T-cell (primary cell): ENCODE measurements at regions of chr1 and their contacts with region 1.

Region 1: GRCh38 chr1:21037091-21037490 is 139.6 kb downstream of the EIF4G3 start:
- DNase-seq: no peak
- ATAC-seq: no peak
- H3K4me3 ChIP-seq: no peak overlapping the region
- H3K4me3 Mint-ChIP-seq: no peak overlapping the region
- H3K27ac ChIP-seq: no peak overlapping the region
- H3K27ac Mint-ChIP-seq: no peak overlapping the region
- H3K4me1 ChIP-seq: no peaks in the 10 kb centered on the region
- H3K4me1 Mint-ChIP-seq: peaks cover 2 to 8% (median 2%) of the 10 kb centered on the region in 3 donors
- H3K27me3 ChIP-seq: no peaks in the 10 kb centered on the region
- H3K27me3 Mint-ChIP-seq: no peaks in the 10 kb centered on the region

Region 2: GRCh38 chr1:20896871-20897223 is 140.2 kb before region 1 on chr1:
- CTCF ChIA-PET with region 1: no interaction called
- POLR2A ChIA-PET with region 1: interaction called in 1 of 2 experiments, 10 read pairs
- DNase-seq: no peak
- ATAC-seq: no peak
- H3K4me3 ChIP-seq: no peak overlapping the region
- H3K4me3 Mint-ChIP-seq: no peak overlapping the region
- H3K27ac ChIP-seq: no peak overlapping the region
- H3K27ac Mint-ChIP-seq: no peak overlapping the region
- H3K4me1 ChIP-seq: no peaks in the 10 kb centered on the region
- H3K4me1 Mint-ChIP-seq: no peaks in the 10 kb centered on the region
- H3K27me3 ChIP-seq: no peaks in the 10 kb centered on the region
- H3K27me3 Mint-ChIP-seq: no peaks in the 10 kb centered on the region

Region 3: DNA sequence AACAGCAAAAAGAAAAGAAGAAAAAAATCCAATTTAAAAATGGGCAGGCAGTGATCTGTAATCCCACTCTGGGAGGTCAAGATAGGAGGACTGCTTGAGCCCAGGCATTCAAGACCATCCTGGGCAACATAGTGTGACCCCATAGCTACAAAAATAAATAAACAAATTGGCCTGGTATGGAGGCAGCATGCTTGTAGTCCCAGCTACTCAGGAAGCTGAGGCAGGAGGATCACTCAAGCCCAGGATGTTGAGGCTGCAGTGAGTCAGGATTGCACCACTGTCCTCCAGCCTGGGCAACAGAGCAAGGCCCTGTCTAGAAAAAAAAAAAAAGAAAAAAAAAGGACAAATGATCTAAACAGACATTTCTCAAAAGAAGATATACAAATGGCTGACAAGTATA is 40.0 kb after region 1 on chr1:
- CTCF ChIA-PET with region 1: no interaction called
- POLR2A ChIA-PET with region 1: interaction called in 1 of 2 experiments, 10 read pairs
- DNase-seq: no peak
- ATAC-seq: no peak
- H3K4me3 ChIP-seq: no peak overlapping the region
- H3K4me3 Mint-ChIP-seq: no peak overlapping the region
- H3K27ac ChIP-seq: no peak overlapping the region
- H3K27ac Mint-ChIP-seq: peak overlapping the region in 1 of 2 donors; percentile 31
- H3K4me1 ChIP-seq: no peaks in the 10 kb centered on the region
- H3K4me1 Mint-ChIP-seq: peaks cover 0 to 11% (median 5%) of the 10 kb centered on the region in 3 donors
- H3K27me3 ChIP-seq: no peaks in the 10 kb centered on the region
- H3K27me3 Mint-ChIP-seq: no peaks in the 10 kb centered on the region